H1 (cell line): ENCODE measurements at regions of chr11 and their contacts with region 1.

Region 1: DNA sequence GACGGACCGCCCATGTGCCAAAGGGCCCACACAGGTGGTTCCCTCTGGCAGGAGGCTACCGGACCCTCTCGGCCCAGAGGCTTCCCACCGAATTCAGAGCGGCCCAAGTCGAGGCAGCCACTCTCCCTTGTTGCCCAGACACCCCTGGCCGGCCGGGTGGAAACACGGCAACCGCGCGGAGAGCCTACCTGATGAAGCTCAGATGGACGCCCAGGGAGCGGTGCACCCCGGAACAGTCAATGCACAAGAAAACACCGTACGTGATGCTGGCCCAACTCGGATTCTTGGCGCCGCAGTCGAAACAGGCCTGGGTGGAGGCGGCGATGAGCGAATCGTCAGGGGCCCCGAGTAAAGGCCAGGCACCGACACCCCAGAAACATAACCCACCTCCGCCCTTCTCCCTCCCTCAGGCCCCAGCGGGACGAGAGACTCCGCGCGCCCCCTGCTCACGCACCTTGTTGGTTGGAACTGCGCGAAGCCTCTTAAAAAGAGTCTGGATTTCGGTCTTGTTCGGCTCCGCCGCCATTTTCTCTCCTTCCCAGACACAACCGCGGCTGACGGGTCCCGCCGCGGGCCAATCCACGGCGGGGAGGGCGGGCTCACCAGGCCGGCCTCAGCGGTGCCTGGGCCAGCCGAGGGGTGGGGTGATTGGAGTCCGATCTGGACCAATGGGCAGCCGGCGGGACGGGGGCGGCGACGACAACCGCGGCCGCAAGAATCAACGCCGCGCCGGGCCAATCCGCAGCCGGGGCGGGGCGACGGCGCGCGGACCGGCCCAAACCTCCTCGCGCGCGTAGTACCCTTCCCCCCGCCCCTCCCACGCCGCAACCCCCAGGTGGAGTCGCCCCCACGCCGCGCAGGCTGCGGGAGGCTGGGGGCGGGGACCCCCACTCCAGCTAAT is at the start of gene ARFGAP2:
- DNase-seq: peak in 1 of 2 experiments; percentile 93
- H3K4me3 ChIP-seq: peak within 1 kb of the TSS; percentile 72 to 93 (median 90)
- H3K27ac ChIP-seq: peak within 1 kb of the TSS; percentile 93
- H3K4me1 ChIP-seq: peaks cover 0 to 8% (median 1%) of the 10 kb centered on the region in 4 experiments; a peak in 5 of 7 replicates
- H3K27me3 ChIP-seq: no peaks in the 10 kb centered on the region
- CTCF ChIP-seq: no peak
- EP300 ChIP-seq: 0 out of 3 replicates have a peak, but pooled peaks of 1 of the 2 experiments have one; percentile 16
- POLR2A ChIP-seq: peak in 1 of 2 experiments; percentile 78; a peak in 2 of 3 replicates
- RAD21 ChIP-seq: no peak
- total RNA-seq, gene ARFGAP2: 50.0 and 50.2 TPM in 2 replicates

Region 2: GRCh38 chr11:47161134-47161854 is 15.3 kb before region 1 on chr11:
- CTCF ChIA-PET with region 1: interaction called, 32 read pairs
- POLR2A ChIA-PET with region 1: interaction called, 17 read pairs
- DNase-seq: peak in 1 of 2 experiments; percentile 90
- H3K4me3 ChIP-seq: no peak overlapping the region
- H3K27ac ChIP-seq: no peak overlapping the region
- H3K4me1 ChIP-seq: no peaks in the 10 kb centered on the region
- H3K27me3 ChIP-seq: no peaks in the 10 kb centered on the region
- CTCF ChIP-seq: peak; percentile 91 to 96 (median 91)
- EP300 ChIP-seq: no peak
- POLR2A ChIP-seq: no peak; a peak in 1 of 3 replicates
- RAD21 ChIP-seq: peak; percentile 88 to 93

Region 3: DNA sequence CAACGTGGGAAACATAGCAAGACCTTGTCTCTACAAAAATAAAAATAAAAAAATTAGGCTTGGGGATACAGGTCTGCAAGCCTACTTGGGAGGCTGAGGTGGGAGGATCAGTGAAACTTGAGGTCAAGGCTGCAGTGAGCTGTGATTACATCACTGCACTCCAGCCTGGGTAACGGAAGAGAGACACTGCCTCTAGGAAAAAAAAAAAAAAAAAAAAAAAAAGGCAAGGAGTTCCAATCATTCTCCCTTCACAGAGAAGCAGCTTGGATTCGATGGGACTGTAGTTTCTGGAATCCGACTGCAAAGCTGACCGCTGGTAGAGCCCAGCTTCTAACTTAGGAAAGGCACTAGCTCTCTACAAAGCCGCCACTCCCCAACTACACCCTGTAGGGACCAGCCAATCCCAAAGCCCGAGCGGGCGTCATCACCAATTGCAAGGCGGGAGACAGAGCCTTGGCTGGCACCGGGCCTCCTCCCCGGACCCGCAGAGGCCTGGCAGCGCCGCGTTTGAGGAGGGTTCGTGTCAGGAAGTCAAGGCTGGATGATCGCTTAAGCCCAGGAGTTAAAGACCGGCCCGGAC is 37.5 kb after region 1 on chr11:
- CTCF ChIA-PET with region 1: interaction called, 247 read pairs
- POLR2A ChIA-PET with region 1: interaction called, 15 read pairs
- DNase-seq: peak; percentile 69 to 88
- H3K4me3 ChIP-seq: peak overlapping the region; percentile 65 to 98 (median 75)
- H3K27ac ChIP-seq: peak overlapping the region; percentile 86
- H3K4me1 ChIP-seq: peaks cover 0 to 10% (median 8%) of the 10 kb centered on the region in 4 experiments; a peak in 6 of 7 replicates
- H3K27me3 ChIP-seq: no peaks in the 10 kb centered on the region
- CTCF ChIP-seq: no peak
- EP300 ChIP-seq: no peak
- POLR2A ChIP-seq: peak; percentile 75
- RAD21 ChIP-seq: no peak

Region 4: GRCh38 chr11:47220401-47220824 is 43.8 kb after region 1 on chr11:
- CTCF ChIA-PET with region 1: interaction called, 247 read pairs
- POLR2A ChIA-PET with region 1: interaction called, 15 read pairs
- DNase-seq: no peak
- H3K4me3 ChIP-seq: no peak overlapping the region
- H3K27ac ChIP-seq: no peak overlapping the region
- H3K4me1 ChIP-seq: peaks cover 0 to 10% (median 8%) of the 10 kb centered on the region in 4 experiments; a peak in 6 of 7 replicates
- H3K27me3 ChIP-seq: no peaks in the 10 kb centered on the region
- CTCF ChIP-seq: no peak
- EP300 ChIP-seq: no peak
- POLR2A ChIP-seq: no peak
- RAD21 ChIP-seq: no peak